Caco-2 (cell line): ENCODE measurements at regions of chr3 and their contacts with region 1.

Region 1: GRCh38 chr3:36964817-36965216 is 20.0 kb upstream of the TRANK1 start:
- DNase-seq: no peak
- H3K4me3 ChIP-seq: no peak overlapping the region
- H3K4me3 Mint-ChIP-seq: peak overlapping the region; percentile 51
- H3K27ac Mint-ChIP-seq: peak overlapping the region; percentile 72
- H3K4me1 ChIP-seq: peaks cover 18% of the 10 kb centered on the region
- H3K4me1 Mint-ChIP-seq: peaks cover 22% of the 10 kb centered on the region
- H3K27me3 ChIP-seq: no peaks in the 10 kb centered on the region
- H3K27me3 Mint-ChIP-seq: no peaks in the 10 kb centered on the region
- CTCF ChIP-seq: no peak

Region 2: DNA sequence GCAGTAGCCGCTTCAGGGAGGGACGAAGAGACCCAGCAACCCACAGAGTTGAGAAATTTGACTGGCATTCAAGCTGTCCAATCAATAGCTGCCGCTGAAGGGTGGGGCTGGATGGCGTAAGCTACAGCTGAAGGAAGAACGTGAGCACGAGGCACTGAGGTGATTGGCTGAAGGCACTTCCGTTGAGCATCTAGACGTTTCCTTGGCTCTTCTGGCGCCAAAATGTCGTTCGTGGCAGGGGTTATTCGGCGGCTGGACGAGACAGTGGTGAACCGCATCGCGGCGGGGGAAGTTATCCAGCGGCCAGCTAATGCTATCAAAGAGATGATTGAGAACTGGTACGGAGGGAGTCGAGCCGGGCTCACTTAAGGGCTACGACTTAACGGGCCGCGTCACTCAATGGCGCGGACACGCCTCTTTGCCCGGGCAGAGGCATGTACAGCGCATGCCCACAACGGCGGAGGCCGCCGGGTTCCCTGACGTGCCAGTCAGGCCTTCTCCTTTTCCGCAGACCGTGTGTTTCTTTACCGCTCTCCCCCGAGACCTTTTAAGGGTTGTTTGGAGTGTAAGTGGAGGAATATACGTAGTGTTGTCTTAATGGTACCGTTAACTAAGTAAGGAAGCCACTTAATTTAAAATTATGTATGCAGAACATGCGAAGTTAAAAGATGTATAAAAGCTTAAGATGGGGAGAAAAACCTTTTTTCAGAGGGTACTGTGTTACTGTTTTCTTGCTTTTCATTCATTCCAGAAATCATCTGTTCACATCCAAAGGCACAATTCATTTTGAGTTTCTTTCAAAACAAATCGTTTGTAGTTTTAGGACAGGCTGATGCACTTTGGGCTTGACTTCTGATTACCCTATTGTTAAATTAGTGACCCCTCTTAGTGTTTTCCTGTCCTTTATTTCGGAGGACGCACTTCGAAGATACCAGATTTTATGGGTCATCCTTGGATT is 28.8 kb after region 1 on chr3 and contains the start of gene MLH1:
- CTCF ChIA-PET with region 1: interaction called, 22 read pairs
- POLR2A ChIA-PET with region 1: interaction called, 20 read pairs
- intact Hi-C with region 1: loop called (anchors 1 kb)
- DNase-seq: peak; percentile 99 to 100
- H3K4me3 ChIP-seq: peak within 1 kb of the TSS; percentile 81
- H3K4me3 Mint-ChIP-seq: no peak within 1 kb of the TSS
- H3K27ac Mint-ChIP-seq: no peak within 1 kb of the TSS
- H3K4me1 ChIP-seq: no peaks in the 10 kb centered on the region
- H3K4me1 Mint-ChIP-seq: no peaks in the 10 kb centered on the region
- H3K27me3 ChIP-seq: no peaks in the 10 kb centered on the region
- H3K27me3 Mint-ChIP-seq: no peaks in the 10 kb centered on the region
- CTCF ChIP-seq: no peak
- total RNA-seq, gene MLH1: 49.6 and 51.0 TPM in 2 replicates